Breast epithelium (tissue), 4 donors: ENCODE measurements at regions of chr13 and their contacts with region 1.

Region 1: DNA sequence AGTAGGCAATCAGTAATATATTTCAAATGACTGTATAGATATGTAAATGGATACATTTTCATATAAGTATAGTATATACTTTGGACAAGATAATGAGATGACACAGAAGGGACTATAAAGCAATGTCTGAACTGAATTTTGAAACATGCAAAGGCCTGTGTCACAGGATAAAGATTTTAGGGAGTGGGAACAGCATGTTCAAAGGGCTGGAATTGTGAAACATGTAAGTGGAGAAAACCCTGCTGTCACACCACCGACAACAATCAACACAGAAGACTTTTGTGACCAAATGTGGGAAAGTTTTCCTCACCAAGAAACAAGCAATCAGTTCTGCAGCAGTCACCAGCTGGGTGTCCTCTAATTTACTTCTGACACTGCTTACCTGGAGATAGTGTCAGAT is 42.9 kb downstream of the LPAR6 start:
- DNase-seq: no peak
- H3K4me3 ChIP-seq: no peak overlapping the region
- H3K27ac ChIP-seq: no peak overlapping the region
- H3K4me1 ChIP-seq: no peaks in the 10 kb centered on the region
- H3K27me3 ChIP-seq: no peaks in the 10 kb centered on the region
- CTCF ChIP-seq: no peak
- POLR2A ChIP-seq: no peak

Region 2: GRCh38 chr13:47934371-47934770 is 435.6 kb before region 1 on chr13:
- intact Hi-C with region 1: no loop called
- DNase-seq: no peak
- H3K4me3 ChIP-seq: no peak overlapping the region
- H3K27ac ChIP-seq: no peak overlapping the region
- H3K4me1 ChIP-seq: peaks cover 0 to 6% of the 10 kb centered on the region in 2 donors
- H3K27me3 ChIP-seq: no peaks in the 10 kb centered on the region
- CTCF ChIP-seq: no peak
- POLR2A ChIP-seq: no peak

Region 3: GRCh38 chr13:48393698-48394085 is 23.7 kb after region 1 on chr13:
- intact Hi-C with region 1: no loop called
- DNase-seq: no peak
- H3K4me3 ChIP-seq: no peak overlapping the region
- H3K27ac ChIP-seq: no peak overlapping the region
- H3K4me1 ChIP-seq: no peaks in the 10 kb centered on the region
- H3K27me3 ChIP-seq: no peaks in the 10 kb centered on the region
- CTCF ChIP-seq: no peak
- POLR2A ChIP-seq: no peak

Region 4: GRCh38 chr13:48431431-48431830 is 61.4 kb after region 1 on chr13:
- intact Hi-C with region 1: no loop called
- DNase-seq: no peak
- H3K4me3 ChIP-seq: no peak overlapping the region
- H3K27ac ChIP-seq: peak overlapping the region; percentile 41 to 50
- H3K4me1 ChIP-seq: no peaks in the 10 kb centered on the region
- H3K27me3 ChIP-seq: no peaks in the 10 kb centered on the region
- CTCF ChIP-seq: no peak
- POLR2A ChIP-seq: no peak

Region 5: GRCh38 chr13:48511621-48512230 is 141.7 kb after region 1 on chr13:
- intact Hi-C with region 1: no loop called
- DNase-seq: no peak
- H3K4me3 ChIP-seq: peak overlapping the region in 1 of 3 donors; percentile 46
- H3K27ac ChIP-seq: peak overlapping the region; percentile 17 to 22
- H3K4me1 ChIP-seq: no peaks in the 10 kb centered on the region
- H3K27me3 ChIP-seq: no peaks in the 10 kb centered on the region
- CTCF ChIP-seq: no peak
- POLR2A ChIP-seq: no peak

Region 6: GRCh38 chr13:48902368-48902767 is 532.4 kb after region 1 on chr13:
- intact Hi-C with region 1: loop called (anchors 10 kb)
- DNase-seq: no peak
- H3K4me3 ChIP-seq: no peak overlapping the region
- H3K27ac ChIP-seq: no peak overlapping the region
- H3K4me1 ChIP-seq: no peaks in the 10 kb centered on the region
- H3K27me3 ChIP-seq: no peaks in the 10 kb centered on the region
- CTCF ChIP-seq: no peak
- POLR2A ChIP-seq: no peak